Activated naive CD4-positive, alpha-beta T cell treated with anti-CD3 and anti-CD28 coated beads for 36 hours (primary cell): ENCODE measurements at regions of chr12 and their contacts with region 1.

Region 1: DNA sequence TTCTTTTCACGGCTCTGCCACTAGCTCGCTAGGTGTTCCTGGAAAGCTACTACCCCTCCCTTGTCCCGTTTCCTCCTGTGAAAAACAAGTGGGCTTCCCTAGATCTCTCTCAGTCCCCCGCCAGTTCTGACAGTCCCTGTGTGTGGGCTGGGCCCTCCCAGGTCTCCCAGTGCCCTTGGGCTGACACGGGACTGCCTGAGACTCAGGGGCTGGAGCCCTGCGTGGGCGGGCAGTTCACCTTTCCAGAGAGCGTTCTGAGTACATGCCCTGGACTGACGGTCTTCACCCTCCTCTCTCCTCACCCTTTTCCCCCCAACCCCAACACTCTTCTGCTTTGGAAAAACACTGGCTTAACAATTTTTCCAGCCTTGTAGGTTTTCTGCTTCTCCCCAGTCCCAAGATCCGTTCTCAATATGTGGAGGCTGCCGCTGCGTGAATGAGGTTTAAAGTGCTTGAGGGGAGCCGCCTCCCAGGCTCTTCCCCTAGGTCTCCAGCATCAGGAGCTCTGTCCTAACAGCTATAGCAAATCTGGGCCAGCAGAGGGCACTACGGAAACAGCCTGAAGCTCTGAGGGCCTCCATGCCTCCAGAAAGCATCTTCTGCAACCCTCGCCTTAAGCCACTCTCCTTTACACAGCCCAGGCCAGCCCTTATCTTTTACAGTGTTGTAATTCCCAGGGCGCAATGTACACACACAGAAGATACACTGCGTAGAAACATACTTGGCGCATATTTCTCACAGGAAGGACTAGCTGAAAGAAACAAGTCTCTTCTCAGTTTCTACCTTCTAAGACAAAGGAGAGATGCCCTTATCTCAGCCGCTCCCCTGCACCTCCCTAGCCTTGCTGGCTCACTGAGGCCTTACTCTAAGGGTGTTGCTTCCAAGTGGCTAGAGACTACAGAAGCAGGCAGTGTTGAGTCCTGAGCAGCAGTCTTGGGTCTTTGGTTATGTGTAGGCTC is 10.4 kb upstream of the DCD start:
- DNase-seq: peak; percentile 72
- H3K4me3 Mint-ChIP-seq: no peak overlapping the region
- H3K27ac Mint-ChIP-seq: no peak overlapping the region
- H3K4me1 Mint-ChIP-seq: no peaks in the 10 kb centered on the region
- H3K27me3 Mint-ChIP-seq: peaks cover 2% of the 10 kb centered on the region

Region 2: DNA sequence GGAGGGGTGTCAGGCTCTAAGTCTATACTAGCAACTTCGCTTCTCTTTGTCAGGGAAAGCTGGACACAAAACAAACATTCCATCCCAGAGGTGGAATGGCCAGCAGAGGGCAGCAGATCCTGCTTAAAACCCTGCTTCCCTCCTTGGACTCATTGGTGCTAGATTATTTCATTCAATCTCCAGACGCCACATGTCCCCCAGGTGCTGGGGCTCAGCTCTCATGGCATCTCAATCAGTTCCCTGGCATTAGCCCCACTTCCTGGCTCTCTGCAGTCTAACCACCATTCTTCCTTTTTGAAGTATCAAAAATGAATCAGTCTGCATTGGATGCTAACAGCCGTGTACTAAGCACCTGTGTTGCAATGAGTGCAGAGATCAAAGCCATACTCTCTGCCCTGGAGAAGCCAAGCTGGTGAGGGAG is 62.0 kb before region 1 on chr12:
- CTCF ChIA-PET with region 1: interaction called, 12 read pairs
- intact Hi-C with region 1: no loop called
- DNase-seq: peak; percentile 77
- H3K4me3 Mint-ChIP-seq: no peak overlapping the region
- H3K27ac Mint-ChIP-seq: no peak overlapping the region
- H3K4me1 Mint-ChIP-seq: peaks cover 5% of the 10 kb centered on the region
- H3K27me3 Mint-ChIP-seq: peaks cover 2% of the 10 kb centered on the region

Region 3: GRCh38 chr12:54701940-54702592 is 43.5 kb after region 1 on chr12:
- CTCF ChIA-PET with region 1: interaction called, 13 read pairs
- intact Hi-C with region 1: no loop called
- DNase-seq: no peak
- H3K4me3 Mint-ChIP-seq: no peak overlapping the region
- H3K27ac Mint-ChIP-seq: no peak overlapping the region
- H3K4me1 Mint-ChIP-seq: no peaks in the 10 kb centered on the region
- H3K27me3 Mint-ChIP-seq: no peaks in the 10 kb centered on the region